Heart left ventricle (tissue), 16 donors: ENCODE measurements at regions of chr13 and their contacts with region 1.

Region 1: DNA sequence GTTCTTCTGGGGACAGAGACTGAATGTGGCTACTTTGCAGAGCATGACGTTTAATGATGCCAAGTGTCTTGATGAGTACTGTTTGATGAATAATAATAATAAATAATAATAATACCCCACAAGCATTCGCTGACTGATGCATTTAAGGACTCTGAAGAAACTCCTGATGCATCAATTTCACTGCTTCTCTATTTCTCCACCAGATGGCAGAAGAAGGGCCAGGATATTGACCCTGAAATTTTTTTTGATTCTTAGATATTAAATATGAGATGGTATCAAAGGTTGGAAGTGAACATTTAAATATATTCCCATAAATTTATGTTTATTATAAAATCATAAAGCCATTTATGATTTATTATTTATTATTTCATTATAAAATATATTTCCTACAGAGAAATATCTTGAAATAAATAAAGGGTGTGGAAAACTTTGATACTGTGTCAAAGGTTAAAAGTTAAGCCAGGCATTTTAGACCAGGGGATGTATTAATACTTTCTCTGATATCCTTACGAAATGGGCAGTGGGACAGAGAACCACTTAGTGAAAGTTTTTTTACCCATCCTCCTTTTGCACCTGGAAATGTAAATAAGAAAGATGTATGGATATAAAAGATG is 170.9 kb downstream of the LACC1 start:
- DNase-seq: no peak
- ATAC-seq: peak in 1 of 4 donors; percentile 55
- H3K4me3 ChIP-seq: no peak overlapping the region
- H3K27ac ChIP-seq: no peak overlapping the region
- H3K4me1 ChIP-seq: peaks cover 0 to 17% (median 0%) of the 10 kb centered on the region in 12 donors
- H3K27me3 ChIP-seq: peaks cover 0 to 2% (median 0%) of the 10 kb centered on the region in 9 donors
- CTCF ChIP-seq: peak; percentile 74 to 95 (median 85)
- POLR2A ChIP-seq: no peak

Region 2: GRCh38 chr13:43905435-43906031 is 145.0 kb before region 1 on chr13:
- intact Hi-C with region 1: loop called (anchors 2 to 5 kb)
- DNase-seq: peak in 1 of 5 donors; percentile 14
- ATAC-seq: peak in 3 of 4 donors; percentile 65 to 71 (median 66)
- H3K4me3 ChIP-seq: no peak overlapping the region
- H3K27ac ChIP-seq: no peak overlapping the region
- H3K4me1 ChIP-seq: peaks cover 0 to 14% (median 0%) of the 10 kb centered on the region in 12 donors
- H3K27me3 ChIP-seq: peaks cover 0 to 6% (median 0%) of the 10 kb centered on the region in 9 donors
- CTCF ChIP-seq: peak; percentile 61 to 87 (median 82)
- POLR2A ChIP-seq: no peak

Region 3: GRCh38 chr13:43991773-43992201 is 58.8 kb before region 1 on chr13:
- intact Hi-C with region 1: loop called in 1 of 10 experiments (anchors 5 kb)
- DNase-seq: peak; percentile 27 to 90 (median 75)
- ATAC-seq: peak; percentile 43 to 97 (median 88)
- H3K4me3 ChIP-seq: no peak overlapping the region
- H3K27ac ChIP-seq: peak overlapping the region in 1 of 12 donors; percentile 7
- H3K4me1 ChIP-seq: peaks cover 0 to 31% (median 7%) of the 10 kb centered on the region in 12 donors
- H3K27me3 ChIP-seq: peaks cover 0 to 5% (median 0%) of the 10 kb centered on the region in 9 donors
- CTCF ChIP-seq: no peak
- POLR2A ChIP-seq: no peak

Region 4: GRCh38 chr13:44116562-44117332 is 66.2 kb after region 1 on chr13:
- intact Hi-C with region 1: loop called in 1 of 10 experiments (anchors 5 kb)
- DNase-seq: peak in 4 of 5 donors; percentile 28 to 73 (median 48)
- ATAC-seq: peak; percentile 90 to 97 (median 94)
- H3K4me3 ChIP-seq: peak overlapping the region in 1 of 12 donors; percentile 4
- H3K27ac ChIP-seq: peak overlapping the region; percentile 40 to 81 (median 72)
- H3K4me1 ChIP-seq: peaks cover 0 to 30% (median 22%) of the 10 kb centered on the region in 12 donors
- H3K27me3 ChIP-seq: no peaks in the 10 kb centered on the region
- CTCF ChIP-seq: peak in 7 of 12 donors; percentile 10 to 30 (median 15)
- POLR2A ChIP-seq: no peak

Region 5: GRCh38 chr13:44141725-44142539 is 91.4 kb after region 1 on chr13:
- intact Hi-C with region 1: loop called in 9 of 10 experiments (anchors 2 to 10 kb)
- DNase-seq: peak; percentile 98 to 100 (median 98)
- ATAC-seq: peak; percentile 99 to 100 (median 100)
- H3K4me3 ChIP-seq: peak overlapping the region; percentile 28 to 73 (median 58)
- H3K27ac ChIP-seq: peak overlapping the region; percentile 86 to 99 (median 96)
- H3K4me1 ChIP-seq: peaks cover 0 to 21% (median 9%) of the 10 kb centered on the region in 12 donors
- H3K27me3 ChIP-seq: no peaks in the 10 kb centered on the region
- CTCF ChIP-seq: peak in 1 of 12 donors; percentile 16
- POLR2A ChIP-seq: peak; percentile 84 to 94

Region 6: GRCh38 chr13:44237276-44237767 is 186.8 kb after region 1 on chr13:
- intact Hi-C with region 1: loop called in 2 of 10 experiments (anchors 5 to 10 kb)
- DNase-seq: peak in 4 of 5 donors; percentile 81 to 86 (median 83)
- ATAC-seq: peak; percentile 98 to 99 (median 99)
- H3K4me3 ChIP-seq: peak overlapping the region in 1 of 12 donors; percentile 0
- H3K27ac ChIP-seq: peak overlapping the region; percentile 79 to 97 (median 88)
- H3K4me1 ChIP-seq: peaks cover 14 to 38% (median 26%) of the 10 kb centered on the region in 12 donors
- H3K27me3 ChIP-seq: no peaks in the 10 kb centered on the region
- CTCF ChIP-seq: no peak
- POLR2A ChIP-seq: peak in 1 of 2 donors; percentile 49